ENCODE measurements at regions of chr9 and their contacts with region 1.

Region 1: DNA sequence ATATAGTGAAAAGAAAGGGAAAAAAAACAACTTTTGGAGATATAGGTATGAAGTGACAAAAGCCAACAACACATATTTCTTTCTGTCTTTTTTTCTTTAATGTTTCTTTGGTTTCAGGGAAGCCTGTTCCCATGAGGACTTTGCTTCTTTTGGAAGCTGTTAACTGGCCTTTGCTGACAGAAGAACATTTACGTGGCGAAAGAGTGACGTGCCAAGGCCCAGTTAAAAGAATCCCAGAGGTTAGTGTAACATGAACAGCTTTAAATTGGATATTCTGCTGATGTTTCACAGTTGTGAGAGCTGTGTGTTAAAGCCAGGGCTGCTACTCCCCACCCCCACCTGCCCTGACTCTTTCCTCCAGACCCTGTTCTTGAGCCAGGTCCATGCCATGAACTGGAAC is 275.9 kb downstream of the CRB2 start:
- DNase-seq: no peak
- H3K4me3 ChIP-seq: no peak overlapping the region
- H3K27ac ChIP-seq: no peak overlapping the region
- H3K4me1 ChIP-seq: no peaks in the 10 kb centered on the region
- H3K27me3 ChIP-seq: no peaks in the 10 kb centered on the region
- CTCF ChIP-seq: no peak

Region 2: DNA sequence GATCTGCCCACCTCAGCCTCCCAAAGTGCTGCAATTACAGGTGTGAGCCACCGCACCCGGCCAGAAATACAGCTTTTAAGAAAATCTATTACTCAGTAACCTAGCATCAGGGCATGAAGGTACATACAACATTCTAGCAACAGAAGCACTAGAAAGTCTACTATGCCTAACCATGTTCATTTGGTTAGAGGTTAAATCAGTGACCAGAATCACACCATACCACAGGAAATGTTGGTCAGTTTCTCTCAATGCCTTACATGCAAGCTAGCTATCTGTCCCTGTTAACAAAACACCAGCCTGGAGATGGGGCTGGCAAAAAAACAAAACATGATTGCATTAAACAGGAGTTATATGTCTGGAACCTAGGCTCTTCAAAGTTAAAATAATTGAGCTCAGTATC is 467.6 kb before region 1 on chr9:
- CTCF ChIA-PET with region 1: interaction called, 14 read pairs
- POLR2A ChIA-PET with region 1: no interaction called
- intact Hi-C with region 1: no loop called
- DNase-seq: no peak
- H3K4me3 ChIP-seq: no peak overlapping the region
- H3K27ac ChIP-seq: no peak overlapping the region
- H3K4me1 ChIP-seq: peaks cover 7% of the 10 kb centered on the region
- H3K27me3 ChIP-seq: no peaks in the 10 kb centered on the region
- CTCF ChIP-seq: no peak

Region 3: GRCh38 chr9:123571240-123571639 is 60.6 kb before region 1 on chr9:
- CTCF ChIA-PET with region 1: no interaction called
- POLR2A ChIA-PET with region 1: no interaction called
- intact Hi-C with region 1: no loop called
- DNase-seq: no peak
- H3K4me3 ChIP-seq: no peak overlapping the region
- H3K27ac ChIP-seq: no peak overlapping the region
- H3K4me1 ChIP-seq: peaks cover 23% of the 10 kb centered on the region
- H3K27me3 ChIP-seq: no peaks in the 10 kb centered on the region
- CTCF ChIP-seq: no peak

Region 4: DNA sequence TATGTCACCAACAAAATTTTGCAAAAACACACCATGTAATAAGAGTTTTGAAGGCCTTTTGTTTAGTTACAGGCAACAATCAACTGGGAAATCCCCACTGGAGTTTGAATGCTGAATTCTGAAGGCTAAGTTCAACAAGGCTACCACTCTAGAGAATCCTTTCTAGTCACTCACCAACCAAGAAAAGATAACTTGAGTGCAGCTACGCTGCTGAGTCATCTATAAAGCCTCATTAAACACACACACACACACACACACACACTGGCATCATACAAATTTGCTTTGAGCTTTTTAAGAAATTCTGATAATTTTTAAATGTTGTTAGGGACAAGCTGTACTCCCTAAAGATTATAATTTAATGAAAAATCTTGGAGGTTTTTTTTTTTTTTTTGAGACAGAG is 78.4 kb after region 1 on chr9:
- CTCF ChIA-PET with region 1: no interaction called
- POLR2A ChIA-PET with region 1: no interaction called
- intact Hi-C with region 1: no loop called
- DNase-seq: no peak
- H3K4me3 ChIP-seq: no peak overlapping the region
- H3K27ac ChIP-seq: no peak overlapping the region
- H3K4me1 ChIP-seq: no peaks in the 10 kb centered on the region
- H3K27me3 ChIP-seq: no peaks in the 10 kb centered on the region
- CTCF ChIP-seq: no peak

Measured in A673 (cell line).